ENCODE measurements at regions of chr1 and their contacts with region 1.

Region 1: DNA sequence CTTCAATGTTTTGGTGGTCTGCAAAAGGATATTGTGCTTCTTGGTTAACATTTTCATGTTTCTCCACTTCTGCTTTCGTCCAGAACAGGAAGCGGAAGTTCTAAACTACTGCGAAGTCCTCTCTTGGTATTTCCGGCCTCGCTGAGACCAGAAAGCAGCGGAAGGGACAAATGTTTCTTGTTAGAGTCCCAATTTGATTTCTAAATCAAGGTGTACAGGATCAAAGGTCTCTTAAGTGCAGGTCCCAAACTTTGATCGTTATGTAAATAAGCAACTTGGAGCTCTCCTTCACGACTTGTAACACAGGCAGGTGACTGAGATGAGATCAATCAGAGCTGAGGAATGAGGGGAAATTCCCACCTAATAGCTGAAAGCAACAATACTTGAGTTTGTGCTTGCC is 40.1 kb upstream of the HMCN1 start:
- DNase-seq: no peak
- H3K4me3 ChIP-seq: no peak overlapping the region
- H3K27ac ChIP-seq: no peak overlapping the region
- H3K4me1 ChIP-seq: no peaks in the 10 kb centered on the region
- H3K27me3 ChIP-seq: no peaks in the 10 kb centered on the region
- CTCF ChIP-seq: no peak

Region 2: DNA sequence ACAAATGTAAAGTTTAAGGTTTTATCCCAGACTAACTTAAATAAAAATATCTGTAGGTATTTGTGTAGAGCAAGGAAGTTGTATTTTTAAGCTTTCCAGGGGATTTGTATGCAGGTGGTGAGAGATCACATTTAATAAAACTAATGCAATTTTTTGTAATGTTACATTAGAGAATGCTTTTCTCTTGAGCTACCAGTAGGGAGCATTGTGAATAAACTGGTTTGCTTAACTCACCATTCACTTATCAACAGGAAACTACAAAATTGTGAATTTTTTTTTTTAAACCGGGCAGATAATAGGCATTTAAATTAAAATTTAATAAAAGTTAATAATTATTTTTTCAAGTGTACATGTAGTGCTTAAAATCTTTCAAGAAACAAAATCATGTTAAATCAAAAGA is 455.6 kb before region 1 on chr1:
- CTCF ChIA-PET with region 1: no interaction called
- dilution Hi-C with region 1: no loop called
- in situ Hi-C with region 1: no loop called
- intact Hi-C with region 1: loop called (anchors 1 kb)
- DNase-seq: no peak
- H3K4me3 ChIP-seq: no peak overlapping the region
- H3K27ac ChIP-seq: no peak overlapping the region
- H3K4me1 ChIP-seq: no peaks in the 10 kb centered on the region
- H3K27me3 ChIP-seq: no peaks in the 10 kb centered on the region
- CTCF ChIP-seq: peak; percentile 44 to 57